ENCODE measurements at regions of chr17 and their contacts with region 1.

Region 1: GRCh38 chr17:67376737-67377487 is at the start of gene PITPNC1:
- DNase-seq: peak; percentile 92
- H3K4me3 Mint-ChIP-seq: peak within 1 kb of the TSS; percentile 92
- H3K27ac Mint-ChIP-seq: peak within 1 kb of the TSS; percentile 80
- H3K4me1 Mint-ChIP-seq: peaks cover 40% of the 10 kb centered on the region
- H3K27me3 Mint-ChIP-seq: no peaks in the 10 kb centered on the region
- total RNA-seq, gene PITPNC1: 35.7 to 37.3 TPM

Region 2: GRCh38 chr17:67276075-67276474 is 100.8 kb before region 1 on chr17:
- CTCF ChIA-PET with region 1: no interaction called
- POLR2A ChIA-PET with region 1: no interaction called
- intact Hi-C with region 1: no loop called
- DNase-seq: no peak
- H3K4me3 Mint-ChIP-seq: no peak overlapping the region
- H3K27ac Mint-ChIP-seq: no peak overlapping the region
- H3K4me1 Mint-ChIP-seq: no peaks in the 10 kb centered on the region
- H3K27me3 Mint-ChIP-seq: no peaks in the 10 kb centered on the region

Region 3: GRCh38 chr17:67366193-67367157 is 10.4 kb before region 1 on chr17 and contains the start of gene PSMD12:
- CTCF ChIA-PET with region 1: interaction called, 39 read pairs
- POLR2A ChIA-PET with region 1: interaction called, 37 read pairs
- intact Hi-C with region 1: loop called (anchors 1 kb)
- DNase-seq: peak; percentile 96
- H3K4me3 Mint-ChIP-seq: peak within 1 kb of the TSS; percentile 95
- H3K27ac Mint-ChIP-seq: peak within 1 kb of the TSS; percentile 98
- H3K4me1 Mint-ChIP-seq: peaks cover 45% of the 10 kb centered on the region
- H3K27me3 Mint-ChIP-seq: no peaks in the 10 kb centered on the region
- total RNA-seq, gene PSMD12: 94.0 to 98.6 TPM

Region 4: DNA sequence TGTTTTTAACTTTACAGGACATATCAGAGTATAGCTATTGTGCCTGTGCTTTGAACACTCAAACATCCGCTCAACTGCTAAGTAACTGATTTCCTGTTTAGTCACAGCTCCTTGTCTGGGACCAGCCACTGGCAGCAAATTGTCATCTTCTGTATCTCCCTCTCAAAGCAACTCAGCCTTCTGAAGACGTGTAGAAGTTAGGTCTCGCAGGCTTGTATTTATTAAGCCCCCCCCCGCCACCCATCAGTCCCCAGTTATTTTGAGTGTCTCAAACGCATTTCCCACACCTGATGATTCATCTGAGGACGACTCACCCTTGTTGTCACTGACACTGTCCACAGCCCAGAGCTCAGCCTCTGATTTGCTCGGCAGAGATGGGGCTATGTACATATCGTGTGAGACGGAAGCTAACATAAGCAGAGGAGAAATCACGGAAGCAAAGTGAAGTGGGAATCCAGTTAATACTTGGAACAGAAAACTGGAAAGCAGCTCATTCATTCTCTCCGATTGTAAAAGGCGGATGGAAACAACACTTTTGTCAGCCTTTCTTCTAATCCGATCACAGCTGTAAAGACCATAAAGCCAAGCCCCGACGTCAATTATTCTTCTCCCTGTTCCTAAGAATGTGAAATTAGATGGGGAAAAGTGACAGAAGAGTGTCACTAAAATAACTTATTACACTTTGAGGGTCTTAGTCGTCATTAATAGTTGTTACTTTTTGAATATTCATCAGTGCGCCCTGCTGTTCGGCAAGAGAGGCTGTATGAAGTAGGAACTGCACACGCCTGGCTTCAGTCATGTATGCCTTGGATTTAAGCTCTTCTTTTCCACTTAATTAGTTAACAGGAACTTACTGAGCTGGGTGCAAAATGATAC is 64.4 kb after region 1 on chr17:
- CTCF ChIA-PET with region 1: interaction called, 23 read pairs
- POLR2A ChIA-PET with region 1: interaction called, 13 read pairs
- intact Hi-C with region 1: no loop called
- DNase-seq: peak; percentile 86
- H3K4me3 Mint-ChIP-seq: peak overlapping the region; percentile 84
- H3K27ac Mint-ChIP-seq: peak overlapping the region; percentile 99
- H3K4me1 Mint-ChIP-seq: peaks cover 62% of the 10 kb centered on the region
- H3K27me3 Mint-ChIP-seq: no peaks in the 10 kb centered on the region

Region 5: DNA sequence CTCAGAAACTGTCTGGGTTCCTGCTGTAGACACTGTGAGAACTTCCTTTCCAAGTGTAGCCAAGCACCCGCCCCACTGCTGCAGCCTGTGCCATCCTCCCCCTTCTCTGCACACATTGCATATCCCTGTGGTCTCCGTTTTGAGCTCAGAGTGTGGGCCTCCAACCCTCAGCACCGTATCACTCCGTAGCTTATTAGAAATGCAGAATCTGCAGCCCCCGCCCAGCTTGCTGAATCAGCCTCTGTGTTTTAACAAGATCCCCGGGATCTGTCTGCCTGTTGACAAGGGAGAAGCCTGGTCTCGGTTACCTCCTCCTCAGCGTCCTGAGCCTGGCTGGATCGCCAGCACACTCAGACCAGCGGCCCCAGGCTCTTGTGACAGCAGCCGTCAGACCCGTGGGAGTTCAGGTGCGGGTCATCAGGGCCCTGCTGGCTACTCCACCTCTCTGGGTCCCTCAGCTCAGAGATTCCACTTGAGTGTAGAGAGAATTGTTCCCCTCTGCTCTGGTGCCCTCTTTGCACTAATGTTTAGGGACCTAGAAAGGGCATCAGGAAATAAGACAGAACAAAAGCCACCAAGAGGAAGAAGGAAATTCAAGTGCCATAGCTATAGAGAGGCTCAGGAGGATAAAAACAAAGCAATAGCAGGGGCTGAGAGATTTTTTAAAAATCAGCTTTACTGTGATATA is 92.4 kb after region 1 on chr17:
- CTCF ChIA-PET with region 1: interaction called, 284 read pairs
- POLR2A ChIA-PET with region 1: interaction called, 22 read pairs
- intact Hi-C with region 1: no loop called
- DNase-seq: peak; percentile 62
- H3K4me3 Mint-ChIP-seq: peak overlapping the region; percentile 64
- H3K27ac Mint-ChIP-seq: peak overlapping the region; percentile 77
- H3K4me1 Mint-ChIP-seq: peaks cover 58% of the 10 kb centered on the region
- H3K27me3 Mint-ChIP-seq: no peaks in the 10 kb centered on the region

Region 6: GRCh38 chr17:67602956-67603355 is 226.0 kb after region 1 on chr17:
- CTCF ChIA-PET with region 1: interaction called, 23 read pairs
- POLR2A ChIA-PET with region 1: no interaction called
- intact Hi-C with region 1: loop called (anchors 2 kb)
- DNase-seq: peak; percentile 61
- H3K4me3 Mint-ChIP-seq: no peak overlapping the region
- H3K27ac Mint-ChIP-seq: no peak overlapping the region
- H3K4me1 Mint-ChIP-seq: peaks cover 10% of the 10 kb centered on the region
- H3K27me3 Mint-ChIP-seq: no peaks in the 10 kb centered on the region

Region 7: GRCh38 chr17:67717624-67718329 is 340.9 kb after region 1 on chr17 and contains the start of gene NOL11:
- CTCF ChIA-PET with region 1: interaction called, 3 read pairs
- POLR2A ChIA-PET with region 1: interaction called, 9 read pairs
- intact Hi-C with region 1: loop called (anchors 1 kb)
- DNase-seq: peak; percentile 100
- H3K4me3 Mint-ChIP-seq: peak within 1 kb of the TSS; percentile 94
- H3K27ac Mint-ChIP-seq: peak within 1 kb of the TSS; percentile 93
- H3K4me1 Mint-ChIP-seq: peaks cover 22% of the 10 kb centered on the region
- H3K27me3 Mint-ChIP-seq: peaks cover 2% of the 10 kb centered on the region
- total RNA-seq, gene NOL11: 59.5 to 62.0 TPM